H1 (cell line): ENCODE measurements at regions of chr20 and their contacts with region 1.

Region 1: DNA sequence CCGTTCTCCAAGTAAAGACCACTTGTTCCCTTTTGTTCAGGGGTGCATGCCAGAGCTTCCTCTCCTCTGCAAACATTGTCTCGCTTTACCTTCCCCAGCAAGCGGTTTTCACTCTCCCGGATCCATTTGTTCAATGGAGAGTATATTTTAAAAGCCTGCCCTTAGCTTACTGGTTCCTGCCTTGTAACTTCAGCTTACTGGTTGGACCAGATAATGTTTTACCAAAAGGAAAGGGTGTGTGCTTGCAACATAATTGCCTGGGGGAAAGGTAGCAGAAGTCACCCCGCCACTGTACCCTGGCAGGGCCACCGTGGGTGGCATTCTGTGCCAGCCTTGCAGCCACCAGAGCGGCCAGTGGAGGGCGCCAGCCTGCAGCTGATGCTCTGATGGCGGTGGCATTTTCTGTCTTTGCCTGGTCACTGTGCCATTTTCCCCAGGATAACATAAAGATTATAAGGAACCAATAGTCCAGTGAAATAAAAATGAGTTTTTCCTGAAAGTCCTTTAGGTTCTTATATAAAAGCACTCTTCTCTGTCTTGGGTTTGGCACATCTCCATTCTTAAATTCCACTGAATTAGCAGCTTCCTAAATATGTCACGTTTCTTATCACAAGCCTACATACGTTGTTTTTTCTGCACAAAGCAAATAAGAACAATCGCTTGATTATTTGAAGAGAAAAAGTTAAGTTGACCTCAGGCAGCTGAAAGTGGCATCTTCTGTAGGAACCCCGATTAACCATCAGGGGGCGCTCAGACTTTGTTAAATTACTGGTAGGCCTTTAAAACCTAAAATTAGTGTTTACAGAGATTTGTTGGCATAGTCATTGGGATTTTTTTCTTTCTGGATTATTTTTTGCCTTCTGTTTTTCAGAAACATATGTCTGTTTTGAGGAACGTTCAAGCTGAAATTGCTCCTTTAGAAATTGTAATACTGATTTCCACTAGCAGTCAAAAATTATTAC is 67.4 kb upstream of the XRN2 start:
- DNase-seq: peak in 1 of 2 experiments; percentile 88
- H3K4me3 ChIP-seq: peak overlapping the region in 1 of 4 experiments; percentile 43; a peak in 2 of 8 replicates
- H3K27ac ChIP-seq: no peak overlapping the region
- H3K4me1 ChIP-seq: peaks cover 0 to 20% (median 10%) of the 10 kb centered on the region in 4 experiments; a peak in 3 of 7 replicates
- H3K27me3 ChIP-seq: no peaks in the 10 kb centered on the region
- CTCF ChIP-seq: peak; percentile 92 to 97 (median 94)
- EP300 ChIP-seq: no peak
- POLR2A ChIP-seq: no peak
- RAD21 ChIP-seq: peak; percentile 82 to 85

Region 2: GRCh38 chr20:20472684-20473274 is 763.0 kb before region 1 on chr20:
- CTCF ChIA-PET with region 1: no interaction called
- POLR2A ChIA-PET with region 1: no interaction called
- DNase-seq: no peak
- H3K4me3 ChIP-seq: no peak overlapping the region
- H3K27ac ChIP-seq: no peak overlapping the region
- H3K4me1 ChIP-seq: peaks cover 0 to 3% (median under 1%) of the 10 kb centered on the region in 4 experiments; a peak in 4 of 7 replicates
- H3K27me3 ChIP-seq: no peaks in the 10 kb centered on the region
- CTCF ChIP-seq: no peak
- EP300 ChIP-seq: no peak
- POLR2A ChIP-seq: no peak
- RAD21 ChIP-seq: no peak

Region 3: GRCh38 chr20:21134883-21135493 is 100.8 kb before region 1 on chr20:
- CTCF ChIA-PET with region 1: interaction called, 13 read pairs
- POLR2A ChIA-PET with region 1: no interaction called
- DNase-seq: no peak
- H3K4me3 ChIP-seq: no peak overlapping the region
- H3K27ac ChIP-seq: no peak overlapping the region
- H3K4me1 ChIP-seq: peaks cover 0 to 9% (median 4%) of the 10 kb centered on the region in 4 experiments; a peak in 3 of 7 replicates
- H3K27me3 ChIP-seq: no peaks in the 10 kb centered on the region
- CTCF ChIP-seq: no peak
- EP300 ChIP-seq: no peak
- POLR2A ChIP-seq: no peak
- RAD21 ChIP-seq: no peak

Region 4: DNA sequence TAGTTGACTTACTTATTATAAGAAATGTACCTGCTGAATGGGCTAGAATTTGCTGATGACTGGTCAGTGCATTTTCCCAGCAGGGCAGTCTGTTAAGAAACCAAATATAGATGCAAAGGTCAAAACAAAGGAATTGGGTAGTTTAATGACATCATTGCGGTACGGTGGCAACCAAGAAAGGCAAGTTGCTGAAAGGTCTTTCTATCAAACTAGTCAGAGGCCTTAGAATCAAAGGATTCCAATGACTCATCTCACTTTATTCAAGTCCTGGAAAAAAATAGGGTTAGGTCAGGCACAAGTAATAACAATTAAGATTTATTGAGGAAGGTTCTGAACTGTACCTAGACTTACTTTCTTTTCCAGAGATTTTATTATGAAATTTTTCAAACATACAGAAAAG is 33.5 kb before region 1 on chr20:
- CTCF ChIA-PET with region 1: interaction called, 28 read pairs
- POLR2A ChIA-PET with region 1: no interaction called
- DNase-seq: no peak
- H3K4me3 ChIP-seq: no peak overlapping the region
- H3K27ac ChIP-seq: no peak overlapping the region
- H3K4me1 ChIP-seq: peaks cover 0 to 4% (median 2%) of the 10 kb centered on the region in 4 experiments; a peak in 2 of 7 replicates
- H3K27me3 ChIP-seq: no peaks in the 10 kb centered on the region
- CTCF ChIP-seq: no peak
- EP300 ChIP-seq: no peak
- POLR2A ChIP-seq: no peak
- RAD21 ChIP-seq: no peak

Region 5: DNA sequence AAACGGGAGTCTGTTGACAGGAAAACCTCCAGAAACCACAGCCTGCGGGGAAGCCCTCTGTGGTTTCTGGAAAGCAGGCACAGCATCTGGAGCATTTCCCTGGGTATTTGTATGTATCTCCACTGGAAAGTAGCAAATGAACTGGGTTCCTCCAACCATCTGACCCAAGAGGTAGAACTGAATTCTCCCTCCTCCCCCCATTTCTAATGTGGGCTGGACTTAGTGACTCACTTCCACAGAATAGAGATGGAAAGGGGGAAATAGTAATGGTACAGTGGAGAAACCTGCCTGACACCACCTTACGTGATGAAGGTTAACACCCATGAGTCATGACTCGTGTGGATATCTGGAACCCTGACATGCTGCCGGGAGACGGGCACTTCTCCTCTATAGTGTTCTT is 15.5 kb after region 1 on chr20:
- CTCF ChIA-PET with region 1: interaction called, 14 read pairs
- POLR2A ChIA-PET with region 1: no interaction called
- DNase-seq: no peak
- H3K4me3 ChIP-seq: no peak overlapping the region
- H3K27ac ChIP-seq: no peak overlapping the region
- H3K4me1 ChIP-seq: no peaks in the 10 kb centered on the region
- H3K27me3 ChIP-seq: no peaks in the 10 kb centered on the region
- CTCF ChIP-seq: no peak
- EP300 ChIP-seq: no peak
- POLR2A ChIP-seq: no peak
- RAD21 ChIP-seq: no peak

Region 6: GRCh38 chr20:21303061-21303871 is 67.5 kb after region 1 on chr20 and contains the start of gene XRN2:
- CTCF ChIA-PET with region 1: interaction called, 9 read pairs
- POLR2A ChIA-PET with region 1: interaction called, 10 read pairs
- DNase-seq: peak; percentile 72 to 98
- H3K4me3 ChIP-seq: peak within 1 kb of the TSS; percentile 77 to 94 (median 86)
- H3K27ac ChIP-seq: peak within 1 kb of the TSS; percentile 98
- H3K4me1 ChIP-seq: peaks cover 0 to 3% (median 1%) of the 10 kb centered on the region in 4 experiments; a peak in 3 of 7 replicates
- H3K27me3 ChIP-seq: no peaks in the 10 kb centered on the region
- CTCF ChIP-seq: no peak
- EP300 ChIP-seq: no peak; a peak in 1 of 3 replicates
- POLR2A ChIP-seq: peak; percentile 93 to 95
- RAD21 ChIP-seq: no peak
- total RNA-seq, gene XRN2: 136 and 139 TPM in 2 replicates

Region 7: GRCh38 chr20:21391185-21391971 is 155.6 kb after region 1 on chr20:
- CTCF ChIA-PET with region 1: interaction called, 17 read pairs
- POLR2A ChIA-PET with region 1: interaction called, 4 read pairs
- DNase-seq: peak in 1 of 2 experiments; percentile 70
- H3K4me3 ChIP-seq: peak overlapping the region; percentile 19 to 60 (median 28)
- H3K27ac ChIP-seq: no peak overlapping the region
- H3K4me1 ChIP-seq: no peaks in the 10 kb centered on the region
- H3K27me3 ChIP-seq: peaks cover 31 to 55% (median 45%) of the 10 kb centered on the region in 4 experiments
- CTCF ChIP-seq: no peak
- EP300 ChIP-seq: no peak
- POLR2A ChIP-seq: no peak
- RAD21 ChIP-seq: no peak

Region 8: DNA sequence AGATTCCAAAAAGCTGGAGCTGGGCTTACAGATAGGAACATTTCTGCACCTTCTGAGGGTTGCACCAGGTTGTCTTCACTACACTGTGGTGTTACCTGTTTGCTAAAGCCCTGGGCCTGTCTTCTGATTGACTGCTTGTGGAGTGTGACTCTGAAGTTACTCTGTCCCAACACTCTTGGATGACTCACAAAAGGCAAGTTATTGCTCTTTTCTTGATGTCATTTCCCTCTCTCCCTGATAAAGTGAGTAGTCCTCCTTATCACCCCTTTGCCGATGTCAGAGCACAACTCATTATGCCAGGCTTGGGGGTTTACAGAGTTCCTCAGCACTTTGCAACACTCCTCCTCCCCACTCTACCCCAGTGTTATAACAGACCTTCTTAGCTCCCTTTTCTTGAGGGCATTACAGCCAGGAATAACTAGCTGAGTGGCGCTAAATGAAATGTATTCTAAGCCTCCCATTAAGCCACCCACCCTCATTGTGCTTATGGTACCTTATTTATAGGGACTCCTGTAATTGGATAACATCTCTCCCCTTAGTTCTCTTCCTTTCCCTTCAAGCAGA is 197.6 kb after region 1 on chr20:
- CTCF ChIA-PET with region 1: no interaction called
- POLR2A ChIA-PET with region 1: no interaction called
- DNase-seq: no peak
- H3K4me3 ChIP-seq: no peak overlapping the region
- H3K27ac ChIP-seq: no peak overlapping the region
- H3K4me1 ChIP-seq: peaks cover 0 to 4% (median 0%) of the 10 kb centered on the region in 4 experiments; a peak in 2 of 7 replicates
- H3K27me3 ChIP-seq: no peaks in the 10 kb centered on the region
- CTCF ChIP-seq: no peak
- EP300 ChIP-seq: no peak
- POLR2A ChIP-seq: no peak
- RAD21 ChIP-seq: no peak

Region 9: GRCh38 chr20:21505161-21505809 is 269.5 kb after region 1 on chr20:
- CTCF ChIA-PET with region 1: interaction called, 90 read pairs
- POLR2A ChIA-PET with region 1: no interaction called
- DNase-seq: peak in 1 of 2 experiments; percentile 100
- H3K4me3 ChIP-seq: peak overlapping the region; percentile 28 to 69 (median 48)
- H3K27ac ChIP-seq: no peak overlapping the region
- H3K4me1 ChIP-seq: peaks cover 6 to 33% (median 10%) of the 10 kb centered on the region in 4 experiments; a peak in 6 of 7 replicates
- H3K27me3 ChIP-seq: peaks cover 47 to 68% (median 59%) of the 10 kb centered on the region in 4 experiments
- CTCF ChIP-seq: peak; percentile 88 to 96 (median 95)
- EP300 ChIP-seq: no peak
- POLR2A ChIP-seq: no peak
- RAD21 ChIP-seq: peak; percentile 100